ENCODE measurements at regions of chr1 and their contacts with region 1.

Region 1: DNA sequence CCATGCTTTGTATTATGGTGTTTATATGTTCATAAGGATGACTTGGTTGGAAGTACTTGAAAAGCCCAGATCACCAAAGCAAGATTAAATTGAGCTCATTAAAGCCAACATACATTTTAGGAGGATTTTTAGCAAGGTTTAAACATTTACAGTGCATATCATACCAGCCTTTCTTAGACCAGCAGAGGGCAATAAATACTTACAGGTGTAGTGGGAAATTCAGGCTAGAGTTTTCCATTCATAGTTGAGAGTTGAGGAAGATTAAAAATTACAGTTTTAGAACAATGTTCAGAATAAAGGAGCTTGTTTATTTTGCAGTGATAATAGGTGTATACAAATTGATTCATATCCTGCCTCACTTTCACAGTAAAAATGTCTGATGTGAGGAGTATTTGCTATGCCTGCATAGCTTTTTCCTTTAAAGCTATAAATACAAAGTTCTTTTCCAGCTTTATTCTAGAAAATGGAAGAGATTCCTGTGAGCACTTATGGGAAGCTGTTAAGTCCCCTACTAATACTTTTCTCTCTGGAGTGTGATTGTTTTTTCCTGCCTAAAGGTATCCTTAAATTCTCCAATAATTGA is 35.3 kb downstream of the DTL start:
- DNase-seq: peak; percentile 32
- CTCF ChIP-seq: peak; percentile 63

Region 2: GRCh38 chr1:211680752-211681327 is 390.0 kb before region 1 on chr1:
- CTCF ChIA-PET with region 1: interaction called, 18 read pairs
- POLR2A ChIA-PET with region 1: no interaction called
- DNase-seq: peak; percentile 79
- CTCF ChIP-seq: peak; percentile 64

Region 3: DNA sequence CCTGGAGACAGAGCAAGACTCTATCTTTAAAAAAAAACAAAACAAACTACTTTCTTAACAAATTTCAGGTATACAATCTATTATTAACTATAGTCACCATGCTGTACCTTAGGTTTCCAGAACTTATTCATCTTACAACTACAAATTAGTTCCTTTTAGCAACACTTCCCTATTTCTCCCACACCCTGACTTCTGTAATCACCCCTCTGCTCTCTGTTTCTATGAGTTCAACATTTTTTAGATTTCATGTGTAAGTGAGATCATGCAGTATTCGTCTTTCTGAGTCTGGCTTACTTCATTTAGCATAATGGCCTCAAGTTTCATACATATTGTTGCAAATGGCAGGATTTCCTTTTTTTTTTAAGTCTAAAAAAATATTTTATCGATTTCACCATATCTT is 162.4 kb before region 1 on chr1:
- CTCF ChIA-PET with region 1: no interaction called
- POLR2A ChIA-PET with region 1: no interaction called
- DNase-seq: peak; percentile 45
- CTCF ChIP-seq: no peak

Region 4: DNA sequence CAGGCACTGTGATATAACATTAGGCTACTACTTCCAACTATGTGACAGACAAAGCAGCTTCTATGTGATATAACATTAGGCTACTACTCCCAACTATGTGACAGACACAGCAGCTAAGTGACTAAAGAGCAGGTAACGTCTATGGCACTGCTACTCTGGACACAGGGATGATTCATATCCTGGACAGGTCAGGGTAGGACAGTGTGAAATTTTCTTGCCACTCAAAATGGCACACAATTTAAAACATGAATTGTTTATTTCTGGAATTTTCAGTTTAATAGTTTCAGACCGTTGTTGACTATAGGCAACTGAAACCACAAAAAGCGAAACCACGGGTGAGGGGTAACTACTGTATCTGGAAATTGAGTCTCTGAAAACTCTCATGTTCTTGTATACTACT is 30.2 kb before region 1 on chr1:
- CTCF ChIA-PET with region 1: interaction called, 15 read pairs
- POLR2A ChIA-PET with region 1: no interaction called
- DNase-seq: no peak
- CTCF ChIP-seq: no peak

Region 5: DNA sequence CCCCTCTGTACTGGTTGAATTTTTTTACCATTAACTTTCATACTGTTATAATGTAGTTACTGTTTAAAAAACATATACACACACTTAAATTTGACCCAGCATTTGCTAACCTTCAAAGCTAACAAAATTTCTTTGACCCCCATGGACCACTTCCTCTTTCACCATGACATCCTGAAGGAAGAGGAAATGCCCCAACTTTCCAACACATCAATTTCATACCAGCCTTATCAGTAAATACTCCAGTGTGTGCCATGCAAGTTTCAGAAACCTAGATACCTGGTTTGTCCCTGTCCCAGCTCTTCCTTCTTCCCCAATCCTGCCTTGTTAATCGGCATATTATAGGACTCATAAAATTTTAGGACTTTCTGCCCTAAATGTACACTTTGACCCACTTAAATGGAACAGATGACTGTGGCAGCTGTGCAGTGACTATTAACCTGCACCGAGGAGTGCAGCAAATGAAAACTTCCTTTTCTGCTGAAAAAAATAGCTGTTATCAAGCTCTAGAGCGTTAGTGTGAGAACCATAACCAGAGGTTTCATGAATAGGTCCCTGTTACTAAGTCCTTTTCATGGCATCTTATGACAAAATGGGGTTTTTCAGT is 18.9 kb after region 1 on chr1:
- CTCF ChIA-PET with region 1: interaction called, 12 read pairs
- POLR2A ChIA-PET with region 1: no interaction called
- DNase-seq: no peak
- CTCF ChIP-seq: no peak

Region 6: GRCh38 chr1:212285685-212286436 is 215.1 kb after region 1 on chr1:
- CTCF ChIA-PET with region 1: interaction called, 28 read pairs
- POLR2A ChIA-PET with region 1: no interaction called
- DNase-seq: peak; percentile 58
- CTCF ChIP-seq: no peak

Region 7: DNA sequence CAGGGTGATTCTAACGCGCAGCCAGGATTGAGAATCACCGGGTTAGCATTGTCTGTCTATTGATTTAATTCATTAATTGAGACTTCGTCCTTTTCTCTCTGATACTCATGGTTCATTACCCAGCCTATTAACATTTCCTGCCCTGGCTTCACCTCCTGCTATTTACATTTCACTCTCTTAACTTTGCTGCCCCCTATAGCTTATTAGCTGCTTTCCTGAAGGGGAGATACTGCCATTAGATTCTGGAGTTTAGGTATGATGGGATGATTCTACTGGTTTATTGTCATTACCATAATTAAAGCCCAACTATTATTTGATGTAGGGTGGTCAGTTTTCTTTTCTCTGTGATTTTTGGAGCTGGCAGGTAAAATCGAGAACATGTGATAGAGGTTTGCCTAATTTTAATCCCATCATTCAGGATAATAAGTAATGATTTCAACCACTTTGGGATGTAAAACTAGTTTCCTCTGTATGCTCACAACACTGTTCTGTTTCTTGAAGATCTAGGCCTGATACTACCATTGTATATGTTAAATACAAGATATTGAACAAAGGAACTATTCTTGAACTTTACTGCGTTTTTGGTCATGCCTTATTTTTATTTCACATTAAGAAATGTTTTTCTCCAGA is 220.8 kb after region 1 on chr1:
- CTCF ChIA-PET with region 1: interaction called, 28 read pairs
- POLR2A ChIA-PET with region 1: interaction called, 3 read pairs
- DNase-seq: peak; percentile 37
- CTCF ChIP-seq: peak; percentile 68

Region 8: DNA sequence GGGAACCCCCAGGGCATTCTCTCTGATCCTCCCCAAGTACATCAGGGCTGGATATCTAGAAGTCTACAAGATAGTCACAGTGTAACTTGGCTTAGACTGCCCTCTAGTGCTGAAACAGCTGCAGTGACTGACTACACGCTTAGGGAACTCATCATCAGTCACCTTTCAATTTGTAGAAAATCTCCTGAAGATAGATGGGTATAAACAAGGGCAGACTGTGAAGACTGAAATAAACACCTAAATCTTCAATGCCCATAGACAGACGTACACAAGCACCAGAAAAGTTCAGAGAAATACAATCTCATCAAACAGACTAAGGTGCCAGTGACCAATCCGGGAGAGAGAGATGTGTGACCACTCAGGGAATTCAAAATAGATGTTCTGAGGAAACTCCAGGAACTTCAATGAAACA is 297.3 kb after region 1 on chr1:
- CTCF ChIA-PET with region 1: interaction called, 58 read pairs
- POLR2A ChIA-PET with region 1: no interaction called
- DNase-seq: peak; percentile 67
- CTCF ChIP-seq: peak; percentile 56

Measured in GM10248 (cell line).